Mammary epithelial cell (primary cell): ENCODE measurements at regions of chr12 and their contacts with region 1.

Region 1: DNA sequence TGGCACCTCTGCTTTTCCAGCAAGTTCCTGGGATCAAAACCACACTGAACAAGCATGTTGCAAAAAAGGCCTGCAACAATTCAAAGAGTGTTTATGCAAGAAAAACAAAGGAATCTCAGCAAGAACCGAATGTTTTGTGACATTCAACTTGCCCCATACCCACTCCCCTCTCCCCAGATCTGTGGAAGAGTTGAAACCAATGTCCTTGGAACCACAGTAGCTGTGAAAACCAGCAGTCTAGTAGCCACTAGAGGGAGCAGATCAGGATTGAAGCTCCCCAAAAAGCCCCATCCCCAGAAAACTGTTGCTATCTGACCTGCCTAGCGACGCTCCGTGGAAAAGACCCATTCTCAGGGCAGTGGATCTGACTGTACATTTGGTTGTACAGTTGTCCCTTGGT is 27.1 kb downstream of the PRKAB1 start:
- DNase-seq: no peak
- H3K4me3 ChIP-seq: no peak overlapping the region
- H3K27ac ChIP-seq: no peak overlapping the region
- H3K4me1 ChIP-seq: no peaks in the 10 kb centered on the region
- H3K27me3 ChIP-seq: no peaks in the 10 kb centered on the region
- CTCF ChIP-seq: peak; percentile 25 to 57

Region 2: DNA sequence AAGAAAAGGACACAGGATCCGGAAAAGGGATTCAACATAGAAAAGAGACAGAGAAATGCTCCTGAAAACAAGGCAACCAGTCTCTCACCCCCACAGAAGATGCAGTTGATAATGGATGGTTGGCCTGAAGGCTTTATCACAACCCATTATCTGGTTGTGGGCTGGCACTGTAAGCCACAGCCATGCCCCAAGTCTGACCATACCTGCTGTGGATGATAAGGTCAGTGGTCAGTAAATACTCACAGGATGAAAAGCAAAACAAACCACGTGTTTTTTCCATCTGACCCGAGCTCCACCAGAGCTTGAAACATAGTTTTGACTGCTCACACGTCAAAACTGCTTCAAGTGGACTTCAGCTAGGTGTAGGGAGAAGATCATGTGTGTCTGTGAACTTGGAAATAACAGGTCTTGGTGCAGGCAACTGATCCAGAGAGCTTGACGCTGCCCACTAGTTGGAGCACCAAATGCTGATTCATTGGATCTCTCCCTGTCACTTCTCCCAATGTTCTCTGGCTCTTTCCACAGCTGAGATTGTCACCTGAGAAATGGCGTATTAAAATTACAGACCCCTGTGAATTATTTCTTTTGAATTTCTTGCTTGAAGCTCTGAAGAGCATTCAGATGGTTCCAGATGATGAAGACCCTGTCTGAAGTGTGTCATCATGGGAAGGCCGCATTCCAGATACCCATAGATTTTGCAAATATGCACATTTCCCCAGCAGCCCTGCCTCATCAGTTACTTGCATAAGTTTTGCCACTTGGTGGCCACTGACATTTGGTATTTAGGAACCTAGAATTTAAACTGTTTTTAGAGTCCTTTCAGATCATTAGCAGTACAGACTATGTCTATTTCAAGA is 92.9 kb before region 1 on chr12:
- CTCF ChIA-PET with region 1: no interaction called
- dilution Hi-C with region 1: no loop called
- in situ Hi-C with region 1: no loop called
- intact Hi-C with region 1: no loop called
- DNase-seq: no peak
- H3K4me3 ChIP-seq: no peak overlapping the region
- H3K27ac ChIP-seq: no peak overlapping the region
- H3K4me1 ChIP-seq: no peaks in the 10 kb centered on the region
- H3K27me3 ChIP-seq: no peaks in the 10 kb centered on the region
- CTCF ChIP-seq: no peak

Region 3: DNA sequence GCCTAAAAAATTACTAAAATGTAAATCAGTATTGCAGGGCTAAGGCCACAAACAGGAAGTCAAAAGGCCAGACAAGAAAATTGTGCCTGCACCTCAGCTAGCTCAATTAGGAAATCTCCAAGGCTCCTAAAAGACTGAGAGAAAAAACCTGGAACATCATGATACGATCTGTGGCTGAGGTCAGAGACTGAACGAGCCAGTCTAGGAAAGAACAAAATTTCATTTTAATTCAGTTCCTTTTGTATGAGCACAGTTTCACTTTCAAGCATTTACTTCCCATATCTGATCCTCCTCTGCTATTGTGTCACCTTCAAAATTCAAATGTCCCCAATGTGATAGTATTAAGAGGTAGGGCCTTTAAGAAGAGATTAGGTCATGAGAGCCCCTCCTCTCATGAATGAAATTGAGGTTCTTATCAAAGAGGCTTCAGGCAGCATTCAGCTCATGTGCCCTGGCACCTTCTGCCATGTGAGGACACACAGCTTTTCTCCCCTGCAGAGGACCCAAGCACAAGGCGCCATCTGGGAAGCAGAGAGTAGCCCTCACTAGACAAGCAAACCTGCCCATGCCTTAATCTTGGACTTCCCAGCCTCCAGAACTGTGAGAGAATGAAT is 12.3 kb before region 1 on chr12:
- CTCF ChIA-PET with region 1: no interaction called
- dilution Hi-C with region 1: no loop called
- in situ Hi-C with region 1: no loop called
- intact Hi-C with region 1: no loop called
- DNase-seq: no peak
- H3K4me3 ChIP-seq: no peak overlapping the region
- H3K27ac ChIP-seq: no peak overlapping the region
- H3K4me1 ChIP-seq: no peaks in the 10 kb centered on the region
- H3K27me3 ChIP-seq: no peaks in the 10 kb centered on the region
- CTCF ChIP-seq: no peak

Region 4: GRCh38 chr12:119730381-119730780 is 35.3 kb after region 1 on chr12:
- CTCF ChIA-PET with region 1: no interaction called
- dilution Hi-C with region 1: loop called (anchors 5 kb)
- in situ Hi-C with region 1: no loop called
- intact Hi-C with region 1: no loop called
- DNase-seq: no peak
- H3K4me3 ChIP-seq: no peak overlapping the region
- H3K27ac ChIP-seq: no peak overlapping the region
- H3K4me1 ChIP-seq: no peaks in the 10 kb centered on the region
- H3K27me3 ChIP-seq: no peaks in the 10 kb centered on the region
- CTCF ChIP-seq: no peak

Region 5: GRCh38 chr12:119938049-119938667 is 243.1 kb after region 1 on chr12:
- CTCF ChIA-PET with region 1: no interaction called
- dilution Hi-C with region 1: no loop called
- in situ Hi-C with region 1: no loop called
- intact Hi-C with region 1: loop called (anchors 1 kb)
- DNase-seq: peak; percentile 27
- H3K4me3 ChIP-seq: no peak overlapping the region
- H3K27ac ChIP-seq: no peak overlapping the region
- H3K4me1 ChIP-seq: peaks cover 7% of the 10 kb centered on the region
- H3K27me3 ChIP-seq: no peaks in the 10 kb centered on the region
- CTCF ChIP-seq: peak; percentile 80 to 94

Region 6: DNA sequence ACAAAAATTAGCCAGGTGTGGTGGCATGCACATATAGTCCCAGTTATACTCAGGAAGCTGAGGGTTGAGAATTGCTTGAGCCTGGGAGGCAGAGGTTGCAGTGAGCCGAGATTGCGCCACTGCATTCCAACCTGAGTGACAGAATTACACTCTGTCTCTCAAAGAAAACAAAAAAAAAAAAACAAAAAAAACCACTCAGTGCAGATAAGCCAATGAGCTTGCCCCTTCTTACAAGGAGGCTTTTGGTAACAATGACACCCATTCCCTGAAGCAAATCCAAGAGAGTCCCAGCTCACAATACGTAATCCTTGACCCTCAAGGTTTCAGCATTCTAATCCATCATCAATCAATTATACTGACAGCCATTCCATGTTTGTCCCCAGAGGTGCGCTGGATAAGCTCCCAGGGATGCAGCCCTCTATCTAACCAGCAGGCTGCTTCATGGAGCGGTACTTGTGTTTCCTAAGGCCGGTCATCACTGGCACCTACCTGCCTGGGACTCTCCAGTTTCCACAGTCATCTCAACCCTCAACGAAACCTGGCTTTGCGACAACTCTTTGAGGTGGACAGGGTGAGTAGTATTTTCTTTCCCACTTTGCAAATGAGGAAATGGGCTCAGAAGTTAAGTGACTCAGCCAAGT is 487.1 kb after region 1 on chr12:
- CTCF ChIA-PET with region 1: no interaction called
- dilution Hi-C with region 1: no loop called
- in situ Hi-C with region 1: no loop called
- intact Hi-C with region 1: no loop called
- DNase-seq: peak; percentile 95
- H3K4me3 ChIP-seq: no peak overlapping the region
- H3K27ac ChIP-seq: peak overlapping the region; percentile 1
- H3K4me1 ChIP-seq: peaks cover 3% of the 10 kb centered on the region
- H3K27me3 ChIP-seq: no peaks in the 10 kb centered on the region
- CTCF ChIP-seq: peak; percentile 2 to 38